Heart left ventricle (tissue), 16 donors: ENCODE measurements at regions of chr2 and their contacts with region 1.

Region 1: DNA sequence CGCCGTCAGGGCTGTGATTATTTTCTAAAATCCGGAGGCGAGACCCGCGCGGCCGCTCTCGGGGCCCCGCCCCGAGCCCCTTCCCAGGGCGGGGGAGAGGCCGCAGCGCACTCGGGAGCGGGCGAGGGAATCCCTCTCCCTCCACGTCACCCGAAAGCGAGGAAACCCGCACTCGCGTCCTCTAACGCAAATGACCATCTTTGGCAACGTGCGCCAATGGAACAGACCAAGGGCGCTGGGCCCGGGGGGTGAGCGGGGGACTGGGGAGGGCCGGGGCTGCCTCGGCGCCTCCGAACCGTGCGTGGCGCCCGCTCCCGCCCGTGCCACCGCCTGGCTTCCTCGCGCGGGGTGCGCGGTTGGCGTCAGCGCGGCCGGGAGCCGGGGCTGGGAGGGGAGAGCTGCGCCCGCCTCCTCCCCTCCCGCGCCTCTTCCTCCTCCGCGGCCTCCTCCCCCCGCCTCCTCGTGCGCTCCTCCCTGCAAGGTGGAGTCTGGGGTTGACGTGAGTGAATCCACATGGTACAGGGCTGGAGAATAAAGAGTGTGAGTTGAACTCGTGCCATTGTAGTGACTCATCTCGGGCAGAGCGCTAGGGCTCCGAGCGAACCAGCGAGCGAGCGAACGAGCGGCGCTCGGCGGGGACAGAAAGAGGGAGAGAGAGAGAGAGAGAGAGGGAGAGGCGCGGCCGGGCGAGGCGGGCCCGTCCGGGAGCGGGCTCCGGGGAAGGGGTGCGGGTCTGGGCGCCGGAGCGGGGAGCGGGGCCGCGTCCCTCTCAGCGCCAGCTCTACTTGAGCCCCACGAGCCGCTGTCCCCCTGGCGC is at the start of gene FOSL2:
- DNase-seq: peak; percentile 97 to 98 (median 98)
- ATAC-seq: peak; percentile 66 to 85 (median 74)
- H3K4me3 ChIP-seq: peak within 1 kb of the TSS; percentile 82 to 100 (median 96)
- H3K27ac ChIP-seq: peak within 1 kb of the TSS; percentile 94 to 100 (median 100)
- H3K4me1 ChIP-seq: peaks cover 7 to 35% (median 24%) of the 10 kb centered on the region in 12 donors
- H3K27me3 ChIP-seq: no peaks in the 10 kb centered on the region
- CTCF ChIP-seq: peak in 1 of 12 donors; percentile 12
- POLR2A ChIP-seq: peak; percentile 84 to 99
- total RNA-seq, gene FOSL2: 26.2 to 144 (median 50.2) TPM

Region 2: GRCh38 chr2:27703638-27704341 is 688.7 kb before region 1 on chr2:
- intact Hi-C with region 1: loop called in 6 of 10 experiments (anchors 2 to 5 kb)
- DNase-seq: peak; percentile 74 to 83 (median 79)
- ATAC-seq: peak; percentile 48 to 66 (median 56)
- H3K4me3 ChIP-seq: no peak overlapping the region
- H3K27ac ChIP-seq: peak overlapping the region in 2 of 12 donors; percentile 8 to 82
- H3K4me1 ChIP-seq: peaks cover 0 to 42% (median 26%) of the 10 kb centered on the region in 12 donors
- H3K27me3 ChIP-seq: no peaks in the 10 kb centered on the region
- CTCF ChIP-seq: peak; percentile 89 to 97 (median 94)
- POLR2A ChIP-seq: no peak

Region 3: GRCh38 chr2:27754138-27754588 is 638.3 kb before region 1 on chr2:
- intact Hi-C with region 1: loop called in 5 of 10 experiments (anchors 5 to 10 kb)
- DNase-seq: peak; percentile 75 to 91 (median 82)
- ATAC-seq: peak; percentile 69 to 86 (median 84)
- H3K4me3 ChIP-seq: no peak overlapping the region
- H3K27ac ChIP-seq: no peak overlapping the region
- H3K4me1 ChIP-seq: peaks cover 0 to 32% (median 3%) of the 10 kb centered on the region in 12 donors
- H3K27me3 ChIP-seq: no peaks in the 10 kb centered on the region
- CTCF ChIP-seq: peak; percentile 73 to 90 (median 81)
- POLR2A ChIP-seq: no peak

Region 4: DNA sequence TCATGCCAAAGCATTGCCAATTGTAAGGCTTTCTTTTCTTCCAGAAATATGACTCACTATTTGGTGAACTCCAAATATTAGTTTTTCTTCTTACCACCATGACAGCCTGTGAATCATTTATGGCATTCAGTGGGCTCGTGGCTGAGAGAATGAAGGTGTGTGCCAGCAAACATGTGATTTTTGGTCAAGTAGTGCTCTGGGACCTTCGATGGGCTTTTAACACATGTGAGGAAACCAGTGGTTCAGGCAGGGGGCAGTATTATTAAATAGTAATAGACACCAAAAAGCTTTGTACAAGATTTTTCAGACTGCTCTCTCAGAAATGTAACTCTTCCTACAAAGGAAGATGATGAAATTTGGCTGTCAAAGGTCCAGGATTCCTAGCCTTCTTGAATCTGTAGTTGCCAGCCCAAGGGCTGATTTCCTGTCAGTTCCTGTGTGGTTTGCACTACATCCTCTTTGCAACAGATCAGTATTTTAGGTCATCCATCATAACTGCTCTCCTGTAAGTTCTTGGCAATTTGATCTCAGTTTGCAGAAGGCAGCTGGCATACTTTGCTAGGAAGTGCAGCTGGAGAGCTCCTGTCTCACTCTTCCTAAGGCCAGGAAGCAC is 437.6 kb before region 1 on chr2:
- intact Hi-C with region 1: loop called in 7 of 10 experiments (anchors 1 to 10 kb)
- DNase-seq: peak in 4 of 5 donors; percentile 47 to 55 (median 50)
- ATAC-seq: peak; percentile 79 to 90 (median 84)
- H3K4me3 ChIP-seq: no peak overlapping the region
- H3K27ac ChIP-seq: peak overlapping the region; percentile 12 to 90 (median 58)
- H3K4me1 ChIP-seq: peaks cover 3 to 83% (median 38%) of the 10 kb centered on the region in 12 donors
- H3K27me3 ChIP-seq: no peaks in the 10 kb centered on the region
- CTCF ChIP-seq: peak in 10 of 12 donors; percentile 15 to 54 (median 46)
- POLR2A ChIP-seq: no peak

Region 5: DNA sequence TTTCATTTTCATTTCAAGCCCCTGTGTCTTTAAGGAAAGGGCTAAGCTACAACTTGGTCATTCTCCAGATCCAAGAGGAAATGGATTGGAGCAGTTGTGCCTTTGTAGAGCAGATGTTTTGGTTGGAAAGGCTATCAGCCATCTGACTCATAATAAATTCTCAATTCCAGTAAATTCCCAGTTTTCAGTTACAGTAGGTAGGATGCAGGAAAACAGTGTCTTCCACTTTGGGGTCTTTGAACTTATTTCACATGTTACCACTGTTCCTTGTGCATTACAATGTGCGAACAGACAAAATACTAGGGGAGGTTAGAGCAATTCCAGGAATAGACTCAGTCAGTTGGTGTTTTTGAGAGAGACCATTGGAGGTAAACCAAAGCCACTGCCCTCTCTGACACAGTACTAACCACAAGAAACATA is 290.0 kb before region 1 on chr2:
- intact Hi-C with region 1: loop called in 6 of 10 experiments (anchors 2 to 5 kb)
- DNase-seq: peak in 2 of 5 donors; percentile 20 to 25
- ATAC-seq: peak; percentile 77 to 89 (median 87)
- H3K4me3 ChIP-seq: peak overlapping the region in 8 of 12 donors; percentile 3 to 40 (median 26)
- H3K27ac ChIP-seq: peak overlapping the region; percentile 43 to 90 (median 76)
- H3K4me1 ChIP-seq: peaks cover 0 to 38% (median 24%) of the 10 kb centered on the region in 12 donors
- H3K27me3 ChIP-seq: no peaks in the 10 kb centered on the region
- CTCF ChIP-seq: no peak
- POLR2A ChIP-seq: no peak

Region 6: DNA sequence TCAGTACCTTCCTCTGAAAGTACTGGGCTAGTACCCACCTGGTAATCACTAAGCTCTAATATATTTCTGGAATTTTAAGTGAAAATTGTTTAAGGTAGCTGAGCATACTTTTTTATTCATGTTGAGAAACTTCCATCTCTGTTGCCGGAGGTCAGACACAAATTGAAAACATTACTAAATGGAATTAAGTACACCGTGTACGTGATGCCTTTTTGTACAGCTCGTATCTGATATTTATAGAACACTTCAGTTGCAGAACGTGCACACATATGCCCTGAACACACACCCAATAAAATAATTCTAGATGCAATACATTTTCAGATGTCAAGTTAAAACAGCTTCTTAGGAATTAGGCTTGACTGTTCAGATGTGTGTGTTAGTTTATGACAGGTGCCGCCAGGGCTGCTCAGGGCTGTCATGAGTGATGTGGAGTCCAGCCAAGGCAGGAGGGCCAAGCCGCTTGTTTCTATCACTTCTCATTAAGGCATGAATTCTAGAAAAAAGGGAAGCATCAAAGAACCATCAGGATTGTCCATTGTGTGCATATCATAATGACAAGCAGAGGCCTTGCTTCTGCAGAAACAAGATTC is 80.8 kb before region 1 on chr2:
- intact Hi-C with region 1: loop called in 1 of 10 experiments (anchors 2 kb)
- DNase-seq: no peak
- ATAC-seq: peak; percentile 75 to 85 (median 82)
- H3K4me3 ChIP-seq: no peak overlapping the region
- H3K27ac ChIP-seq: peak overlapping the region in 7 of 12 donors; percentile 23 to 73 (median 48)
- H3K4me1 ChIP-seq: peaks cover 0 to 22% (median 5%) of the 10 kb centered on the region in 12 donors
- H3K27me3 ChIP-seq: no peaks in the 10 kb centered on the region
- CTCF ChIP-seq: no peak
- POLR2A ChIP-seq: no peak